Activated CD4-positive, alpha-beta T cell treated with anti-CD3 and anti-CD28 coated beads, Interleukin-2, amount 10 ng/mL, durations not matched to agents 24 days and 14 days (primary cell): ENCODE measurements at regions of chr1 and their contacts with region 1.

Region 1: GRCh38 chr1:154352581-154353459 is 27.5 kb downstream of the ATP8B2 start:
- DNase-seq: peak; percentile 80
- H3K4me3 Mint-ChIP-seq: peak overlapping the region; percentile 87
- H3K27ac Mint-ChIP-seq: peak overlapping the region; percentile 65
- H3K4me1 Mint-ChIP-seq: peaks cover 23% of the 10 kb centered on the region
- H3K27me3 Mint-ChIP-seq: no peaks in the 10 kb centered on the region

Region 2: DNA sequence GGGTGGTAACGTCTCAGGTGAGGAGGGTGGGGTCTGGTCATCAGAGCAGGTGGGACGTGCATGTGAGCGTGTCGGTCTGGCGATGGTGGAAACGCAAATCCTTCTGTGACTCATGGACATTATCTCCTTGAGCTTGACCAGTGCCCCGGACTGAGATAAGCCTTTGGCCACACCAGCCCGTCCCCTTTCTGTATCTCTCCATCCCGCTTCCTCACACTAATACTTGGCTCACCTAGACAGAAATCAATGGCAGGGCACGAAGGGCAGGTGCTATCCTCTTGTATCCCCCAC is 39.8 kb before region 1 on chr1:
- intact Hi-C with region 1: no loop called
- DNase-seq: no peak
- H3K4me3 Mint-ChIP-seq: no peak overlapping the region
- H3K27ac Mint-ChIP-seq: no peak overlapping the region
- H3K4me1 Mint-ChIP-seq: peaks cover 4% of the 10 kb centered on the region
- H3K27me3 Mint-ChIP-seq: peaks cover 7% of the 10 kb centered on the region

Region 3: GRCh38 chr1:154324669-154325582 is 27.9 kb before region 1 on chr1 and contains the start of gene ATP8B2:
- intact Hi-C with region 1: loop called (anchors 1 kb)
- DNase-seq: peak; percentile 95
- H3K4me3 Mint-ChIP-seq: peak within 1 kb of the TSS; percentile 98
- H3K27ac Mint-ChIP-seq: peak within 1 kb of the TSS; percentile 92
- H3K4me1 Mint-ChIP-seq: peaks cover 34% of the 10 kb centered on the region
- H3K27me3 Mint-ChIP-seq: peaks cover 21% of the 10 kb centered on the region
- total RNA-seq, gene ATP8B2: 49.4 and 49.6 TPM in 2 replicates

Region 4: DNA sequence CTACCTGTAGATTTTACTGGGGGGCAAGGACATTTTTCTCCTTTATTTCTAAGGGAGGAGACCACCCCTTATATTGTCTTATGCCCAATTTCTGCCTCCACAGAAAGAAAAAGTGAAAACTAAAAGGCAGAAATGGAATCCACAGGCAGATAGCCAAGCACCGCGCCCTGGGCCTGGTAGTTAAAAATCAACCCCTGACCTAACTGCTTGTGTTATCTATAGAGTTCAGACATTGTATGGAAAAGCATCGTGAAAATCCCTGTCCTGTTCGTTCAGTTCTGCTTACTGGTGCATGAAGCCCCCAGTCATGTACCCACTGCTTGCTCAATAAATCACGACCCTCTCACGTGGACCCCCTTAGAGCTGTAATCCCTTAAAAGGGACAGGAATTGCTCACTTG is 18.6 kb after region 1 on chr1:
- intact Hi-C with region 1: no loop called
- DNase-seq: no peak
- H3K4me3 Mint-ChIP-seq: no peak overlapping the region
- H3K27ac Mint-ChIP-seq: no peak overlapping the region
- H3K4me1 Mint-ChIP-seq: peaks cover 8% of the 10 kb centered on the region
- H3K27me3 Mint-ChIP-seq: no peaks in the 10 kb centered on the region

Region 5: GRCh38 chr1:154386643-154387352 is 34.0 kb after region 1 on chr1:
- intact Hi-C with region 1: loop called (anchors 5 kb)
- DNase-seq: peak; percentile 86
- H3K4me3 Mint-ChIP-seq: peak overlapping the region; percentile 78
- H3K27ac Mint-ChIP-seq: peak overlapping the region; percentile 94
- H3K4me1 Mint-ChIP-seq: peaks cover 18% of the 10 kb centered on the region
- H3K27me3 Mint-ChIP-seq: no peaks in the 10 kb centered on the region

Region 6: GRCh38 chr1:154463512-154463990 is 110.7 kb after region 1 on chr1:
- intact Hi-C with region 1: loop called (anchors 5 kb)
- DNase-seq: peak; percentile 87
- H3K4me3 Mint-ChIP-seq: peak overlapping the region; percentile 24
- H3K27ac Mint-ChIP-seq: peak overlapping the region; percentile 75
- H3K4me1 Mint-ChIP-seq: peaks cover 42% of the 10 kb centered on the region
- H3K27me3 Mint-ChIP-seq: no peaks in the 10 kb centered on the region